ENCODE measurements at regions of chr10 and their contacts with region 1.

Region 1: DNA sequence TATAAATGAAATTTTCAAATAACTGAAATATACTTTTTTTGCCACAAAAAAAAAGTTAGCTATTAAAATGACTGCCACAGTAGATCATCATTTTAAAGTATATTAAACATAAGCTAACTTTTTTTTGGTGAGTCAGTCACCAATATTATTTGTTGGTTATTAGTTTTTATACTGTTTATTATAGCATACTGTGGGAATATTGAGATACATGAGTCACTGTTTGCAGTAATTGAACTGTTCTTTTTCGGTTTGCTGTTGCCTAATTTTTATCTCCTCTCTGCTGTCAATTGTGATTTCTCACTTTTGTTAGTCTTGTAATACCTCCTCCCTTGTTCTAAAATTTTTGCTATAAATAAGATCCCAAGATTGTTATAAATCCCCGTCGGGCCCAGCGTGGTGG is 45.7 kb downstream of the BTAF1 start:
- DNase-seq: no peak
- ATAC-seq: no peak
- H3K4me3 ChIP-seq: no peak overlapping the region
- H3K27ac ChIP-seq: no peak overlapping the region
- H3K4me1 ChIP-seq: no peaks in the 10 kb centered on the region
- H3K27me3 ChIP-seq: no peaks in the 10 kb centered on the region
- CTCF ChIP-seq: no peak

Region 2: GRCh38 chr10:91820144-91820543 is 149.2 kb before region 1 on chr10:
- intact Hi-C with region 1: no loop called
- DNase-seq: no peak
- ATAC-seq: no peak
- H3K4me3 ChIP-seq: no peak overlapping the region
- H3K27ac ChIP-seq: no peak overlapping the region
- H3K4me1 ChIP-seq: peaks cover 0 to 13% (median 7%) of the 10 kb centered on the region in 9 donors
- H3K27me3 ChIP-seq: no peaks in the 10 kb centered on the region
- CTCF ChIP-seq: no peak

Region 3: DNA sequence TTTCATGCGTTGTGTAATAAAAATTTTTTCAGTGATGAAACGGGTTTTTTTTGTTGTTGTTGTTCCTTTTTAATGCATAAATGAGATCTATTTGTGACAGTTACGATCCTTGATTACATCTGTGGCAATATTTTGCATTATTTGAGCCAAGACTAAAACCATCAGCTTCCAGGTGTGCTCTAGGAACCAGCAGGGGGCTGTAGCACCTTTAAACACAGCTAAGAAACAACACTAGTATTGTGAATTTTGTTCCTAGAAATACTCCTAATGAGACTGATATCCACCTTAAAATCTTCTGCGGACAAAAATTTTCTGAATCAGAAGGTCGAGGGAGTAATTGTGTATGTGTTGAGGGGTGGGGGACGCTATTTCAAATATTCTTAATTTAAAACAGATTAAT is 112.7 kb before region 1 on chr10:
- intact Hi-C with region 1: loop called in 1 of 10 experiments (anchors 10 kb)
- DNase-seq: no peak
- ATAC-seq: no peak
- H3K4me3 ChIP-seq: no peak overlapping the region
- H3K27ac ChIP-seq: no peak overlapping the region
- H3K4me1 ChIP-seq: no peaks in the 10 kb centered on the region
- H3K27me3 ChIP-seq: no peaks in the 10 kb centered on the region
- CTCF ChIP-seq: peak in 5 of 9 donors; percentile 9 to 38 (median 28)

Region 4: GRCh38 chr10:91901784-91902677 is 67.3 kb before region 1 on chr10:
- intact Hi-C with region 1: no loop called
- DNase-seq: no peak
- ATAC-seq: peak in 5 of 8 donors; percentile 16 to 83 (median 50)
- H3K4me3 ChIP-seq: no peak overlapping the region
- H3K27ac ChIP-seq: peak overlapping the region in 1 of 10 donors; percentile 74
- H3K4me1 ChIP-seq: peaks cover 0 to 14% (median 0%) of the 10 kb centered on the region in 9 donors
- H3K27me3 ChIP-seq: no peaks in the 10 kb centered on the region
- CTCF ChIP-seq: no peak

Region 5: GRCh38 chr10:91983416-91983815 is 14.1 kb after region 1 on chr10:
- intact Hi-C with region 1: loop called in 1 of 10 experiments (anchors 1 kb)
- DNase-seq: peak in 1 of 2 donors; percentile 44
- ATAC-seq: peak; percentile 61 to 98 (median 88)
- H3K4me3 ChIP-seq: no peak overlapping the region
- H3K27ac ChIP-seq: peak overlapping the region in 3 of 10 donors; percentile 0 to 27 (median 11)
- H3K4me1 ChIP-seq: peaks cover 0 to 10% (median 0%) of the 10 kb centered on the region in 9 donors
- H3K27me3 ChIP-seq: no peaks in the 10 kb centered on the region
- CTCF ChIP-seq: no peak

Region 6: DNA sequence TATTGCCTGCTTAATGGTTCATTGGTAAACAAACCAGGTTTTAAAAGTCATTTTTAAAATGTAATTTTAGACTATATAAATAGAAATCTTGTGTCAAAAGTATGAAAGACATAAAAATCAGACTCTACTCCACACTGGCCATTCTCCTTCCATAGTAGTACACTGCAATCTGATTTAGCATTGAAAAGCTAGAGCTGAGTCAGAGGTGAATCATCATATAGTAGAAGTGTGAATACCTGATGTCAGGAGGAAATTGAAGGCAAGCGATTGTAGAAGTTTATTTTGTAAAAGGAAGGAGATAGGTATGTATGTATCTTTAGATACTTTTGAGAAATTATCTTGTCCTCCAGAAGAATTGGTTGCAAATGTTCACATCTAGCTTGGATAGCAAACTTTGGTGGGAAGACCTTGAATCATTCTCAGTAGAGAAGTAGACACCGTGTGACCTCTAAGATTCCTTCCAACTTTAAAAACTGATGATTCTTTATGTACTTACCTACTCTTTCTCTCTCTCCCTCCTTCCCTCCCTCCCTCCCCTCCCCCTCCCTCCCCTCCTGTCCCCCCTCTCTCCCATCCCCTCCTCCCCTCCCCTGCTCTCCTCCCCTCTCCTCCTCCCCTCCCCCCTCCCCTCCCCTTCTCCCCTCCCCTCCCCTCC is 42.4 kb after region 1 on chr10:
- intact Hi-C with region 1: no loop called
- DNase-seq: no peak
- ATAC-seq: no peak
- H3K4me3 ChIP-seq: no peak overlapping the region
- H3K27ac ChIP-seq: no peak overlapping the region
- H3K4me1 ChIP-seq: no peaks in the 10 kb centered on the region
- H3K27me3 ChIP-seq: no peaks in the 10 kb centered on the region
- CTCF ChIP-seq: no peak

Region 7: DNA sequence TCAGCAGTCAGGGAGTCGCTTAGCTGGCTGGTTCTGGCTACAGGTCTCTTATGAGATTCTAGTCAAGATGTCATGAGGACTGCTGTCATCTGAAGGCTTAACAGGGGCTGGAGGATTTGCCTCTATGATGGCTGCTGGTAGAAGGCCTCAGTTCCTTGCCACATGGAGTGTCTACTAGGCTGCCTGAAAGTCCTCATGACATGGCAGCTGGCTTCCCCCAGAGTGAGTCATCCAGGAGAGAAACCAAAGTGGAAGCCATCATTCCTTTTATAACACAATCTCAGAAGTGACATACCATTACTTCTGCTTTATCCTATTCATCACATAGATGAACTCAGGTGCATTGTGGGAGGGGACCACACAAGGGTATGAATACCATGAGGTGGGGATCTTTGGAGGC is 954.1 kb after region 1 on chr10:
- intact Hi-C with region 1: no loop called
- DNase-seq: no peak
- ATAC-seq: no peak
- H3K4me3 ChIP-seq: no peak overlapping the region
- H3K27ac ChIP-seq: no peak overlapping the region
- H3K4me1 ChIP-seq: no peaks in the 10 kb centered on the region
- H3K27me3 ChIP-seq: no peaks in the 10 kb centered on the region
- CTCF ChIP-seq: no peak

Measured in heart right ventricle (tissue), 16 donors.